Calu3 (cell line): ENCODE measurements at regions of chr2 and their contacts with region 1.

Region 1: DNA sequence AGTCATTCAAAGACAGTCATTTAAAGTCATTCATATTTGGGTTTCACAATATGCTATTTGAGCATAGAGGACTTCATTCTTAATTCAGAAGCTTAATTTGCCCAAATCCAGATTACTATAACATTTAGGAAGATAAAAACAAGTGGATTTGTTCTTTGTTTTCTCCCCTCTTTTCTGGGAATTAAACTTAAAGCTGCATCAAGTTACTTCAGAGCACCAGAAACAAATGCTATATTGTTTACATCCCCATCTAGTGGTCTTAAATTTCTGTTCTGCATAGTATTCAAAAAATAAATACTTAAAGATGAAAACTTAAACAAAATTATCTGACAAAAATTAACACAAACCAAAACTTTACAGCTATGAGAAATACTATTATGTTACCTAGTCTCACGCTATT is 34.7 kb upstream of the MARCHF7 start:
- DNase-seq: no peak
- H3K4me3 Mint-ChIP-seq: no peak overlapping the region
- H3K27ac Mint-ChIP-seq: no peak overlapping the region
- H3K4me1 Mint-ChIP-seq: no peaks in the 10 kb centered on the region
- H3K27me3 Mint-ChIP-seq: no peaks in the 10 kb centered on the region
- CTCF ChIP-seq: no peak

Region 2: GRCh38 chr2:159557451-159558034 is 120.1 kb before region 1 on chr2:
- CTCF ChIA-PET with region 1: interaction called, 6 read pairs
- intact Hi-C with region 1: loop called (anchors 1 kb)
- DNase-seq: peak; percentile 7
- H3K4me3 Mint-ChIP-seq: no peak overlapping the region
- H3K27ac Mint-ChIP-seq: peak overlapping the region; percentile 26
- H3K4me1 Mint-ChIP-seq: peaks cover 12% of the 10 kb centered on the region
- H3K27me3 Mint-ChIP-seq: no peaks in the 10 kb centered on the region
- CTCF ChIP-seq: no peak

Region 3: GRCh38 chr2:159615140-159615951 is 62.3 kb before region 1 on chr2:
- CTCF ChIA-PET with region 1: interaction called, 5 read pairs
- intact Hi-C with region 1: loop called (anchors 5 kb)
- DNase-seq: peak; percentile 88
- H3K4me3 Mint-ChIP-seq: peak overlapping the region; percentile 89
- H3K27ac Mint-ChIP-seq: peak overlapping the region; percentile 100
- H3K4me1 Mint-ChIP-seq: peaks cover 29% of the 10 kb centered on the region
- H3K27me3 Mint-ChIP-seq: no peaks in the 10 kb centered on the region
- CTCF ChIP-seq: no peak

Region 4: GRCh38 chr2:159939946-159940345 is 262.3 kb after region 1 on chr2:
- CTCF ChIA-PET with region 1: no interaction called
- intact Hi-C with region 1: no loop called
- DNase-seq: peak; percentile 18
- H3K4me3 Mint-ChIP-seq: no peak overlapping the region
- H3K27ac Mint-ChIP-seq: no peak overlapping the region
- H3K4me1 Mint-ChIP-seq: no peaks in the 10 kb centered on the region
- H3K27me3 Mint-ChIP-seq: no peaks in the 10 kb centered on the region
- CTCF ChIP-seq: no peak